GM13976 (cell line): ENCODE measurements at regions of chr15 and their contacts with region 1.

Region 1: GRCh38 chr15:92097474-92098178 is 244.1 kb downstream of the SLCO3A1 start:
- DNase-seq: peak; percentile 72
- CTCF ChIP-seq: peak; percentile 67

Region 2: GRCh38 chr15:92226014-92226612 is 128.5 kb after region 1 on chr15:
- in situ Hi-C with region 1: loop called (anchors 10 kb)
- DNase-seq: no peak
- CTCF ChIP-seq: peak; percentile 5

Region 3: GRCh38 chr15:92277776-92278175 is 180.2 kb after region 1 on chr15:
- in situ Hi-C with region 1: loop called (anchors 25 kb)
- DNase-seq: peak; percentile 13
- CTCF ChIP-seq: peak; percentile 11

Region 4: GRCh38 chr15:92355307-92355706 is 257.7 kb after region 1 on chr15:
- in situ Hi-C with region 1: no loop called
- DNase-seq: no peak
- CTCF ChIP-seq: no peak

Region 5: DNA sequence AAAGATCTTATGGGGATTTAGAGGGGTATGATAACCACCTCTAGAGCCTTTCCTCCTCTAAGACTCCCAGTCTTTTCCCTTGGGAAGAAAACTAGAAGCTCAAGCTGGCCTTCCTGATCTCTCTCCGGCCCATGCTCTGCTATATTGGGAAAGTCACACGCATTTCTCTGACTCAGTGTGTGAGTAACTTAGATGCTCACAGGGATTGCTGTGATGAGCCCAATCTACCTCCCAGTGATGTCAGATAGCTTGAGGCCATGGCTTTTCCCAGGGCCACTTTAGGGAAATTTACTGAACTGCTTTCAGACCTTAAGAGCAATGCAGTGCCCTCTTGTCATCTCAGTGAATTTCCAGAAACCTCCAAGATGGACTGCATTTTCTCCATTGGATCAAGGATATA is 287.5 kb after region 1 on chr15:
- in situ Hi-C with region 1: loop called (anchors 5 kb)
- DNase-seq: no peak
- CTCF ChIP-seq: no peak